ENCODE measurements at regions of chr7 and their contacts with region 1.

Region 1: GRCh38 chr7:115009736-115010440 is 88.0 kb downstream of the MDFIC start:
- DNase-seq: no peak
- ATAC-seq: peak; percentile 73

Region 2: DNA sequence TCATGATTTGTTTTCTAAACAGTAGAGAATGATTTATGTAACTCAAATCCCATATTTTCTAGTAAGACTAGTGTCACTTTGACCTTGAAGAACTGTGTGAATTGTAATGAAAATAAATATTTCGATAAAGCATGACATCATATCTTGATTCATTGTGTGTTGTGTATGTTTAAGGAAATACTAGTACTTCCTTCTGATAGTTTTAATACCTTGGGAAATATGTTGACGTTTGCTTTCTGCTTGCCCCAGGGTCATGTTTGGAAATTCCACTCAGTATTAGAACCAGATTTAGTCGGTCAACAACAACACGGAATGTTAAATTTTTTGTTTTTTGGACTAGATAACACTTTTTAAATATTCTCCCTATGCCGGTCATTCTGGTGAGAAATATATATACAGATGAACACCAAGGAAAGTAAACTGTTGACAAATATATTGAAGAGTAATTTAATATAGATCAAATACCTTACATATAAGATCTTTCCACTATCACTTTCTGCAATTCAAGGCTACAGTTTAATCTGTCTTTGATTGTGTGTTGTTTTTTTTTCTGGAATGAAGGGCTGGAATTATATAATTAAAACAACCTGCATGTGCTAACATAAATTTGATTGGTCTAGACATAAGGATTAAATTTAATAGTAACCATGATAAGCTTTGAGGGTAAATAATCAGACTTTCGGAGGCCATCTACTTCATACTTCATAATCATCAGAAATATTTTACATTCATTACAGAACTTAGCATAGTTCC is 38.3 kb after region 1 on chr7:
- intact Hi-C with region 1: no loop called
- DNase-seq: no peak
- ATAC-seq: no peak

Region 3: GRCh38 chr7:115087437-115087836 is 77.5 kb after region 1 on chr7:
- intact Hi-C with region 1: loop called (anchors 10 kb)
- DNase-seq: no peak
- ATAC-seq: peak; percentile 89

Measured in Right ventricle myocardium superior (tissue), 1 donor.